Transverse colon (tissue), 4 donors: ENCODE measurements at regions of chr17 and their contacts with region 1.

Region 1: DNA sequence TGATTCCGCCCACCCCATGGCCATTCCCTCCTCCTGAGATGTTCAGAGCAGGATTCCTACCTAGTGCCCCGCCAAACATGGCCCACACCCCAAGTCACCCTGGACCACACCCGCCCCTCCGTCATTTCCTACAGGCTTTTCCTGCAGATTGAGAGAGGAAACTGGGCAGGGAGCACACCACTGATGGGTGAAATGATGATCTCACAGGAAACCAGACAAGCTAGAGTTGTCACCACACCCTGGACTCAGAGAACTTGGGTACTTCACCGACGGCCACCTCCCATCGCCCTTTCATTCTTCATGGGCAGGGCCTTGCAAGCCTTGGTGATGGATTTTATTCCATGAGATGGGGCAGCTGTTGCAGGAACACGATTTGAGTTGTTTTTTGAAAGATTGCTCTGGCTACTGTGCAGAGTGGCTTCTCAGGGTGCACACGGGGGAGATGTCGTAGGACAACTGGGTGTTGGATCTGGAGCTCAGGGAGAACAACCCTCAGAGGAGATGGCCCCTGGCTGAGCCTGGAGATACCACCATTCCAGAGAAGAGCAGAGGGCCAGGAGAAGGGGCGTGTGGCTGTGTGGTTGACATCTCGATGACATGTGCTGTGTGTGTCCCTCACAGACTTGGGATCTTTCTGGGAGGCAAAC is 7.4 kb upstream of the B9D1 start:
- DNase-seq: peak; percentile 43
- H3K4me3 ChIP-seq: no peak overlapping the region
- H3K27ac ChIP-seq: peak overlapping the region in 1 of 4 donors; percentile 5
- H3K4me1 ChIP-seq: peaks cover 0 to 12% (median 4%) of the 10 kb centered on the region in 4 donors
- H3K27me3 ChIP-seq: no peaks in the 10 kb centered on the region
- CTCF ChIP-seq: no peak
- EP300 ChIP-seq: no peak
- POLR2A ChIP-seq: no peak

Region 2: GRCh38 chr17:19433727-19434340 is 63.9 kb after region 1 on chr17:
- in situ Hi-C with region 1: no loop called
- intact Hi-C with region 1: loop called (anchors 5 kb)
- DNase-seq: no peak
- H3K4me3 ChIP-seq: no peak overlapping the region
- H3K27ac ChIP-seq: no peak overlapping the region
- H3K4me1 ChIP-seq: no peaks in the 10 kb centered on the region
- H3K27me3 ChIP-seq: no peaks in the 10 kb centered on the region
- CTCF ChIP-seq: no peak
- EP300 ChIP-seq: no peak
- POLR2A ChIP-seq: no peak